Common myeloid progenitor, CD34-positive (primary cell): ENCODE measurements at regions of chr10 and their contacts with region 1.

Region 1: GRCh38 chr10:47024399-47025252 is 113.4 kb downstream of the PTPN20 start:
- DNase-seq: peak; percentile 68 to 77 (median 70)
- H3K4me3 ChIP-seq: no peak overlapping the region
- H3K27ac ChIP-seq: no peak overlapping the region
- H3K4me1 ChIP-seq: peaks cover 0 to 5% (median 1%) of the 10 kb centered on the region in 4 experiments
- H3K27me3 ChIP-seq: peaks cover 0 to 2% (median 0%) of the 10 kb centered on the region in 5 experiments

Region 2: DNA sequence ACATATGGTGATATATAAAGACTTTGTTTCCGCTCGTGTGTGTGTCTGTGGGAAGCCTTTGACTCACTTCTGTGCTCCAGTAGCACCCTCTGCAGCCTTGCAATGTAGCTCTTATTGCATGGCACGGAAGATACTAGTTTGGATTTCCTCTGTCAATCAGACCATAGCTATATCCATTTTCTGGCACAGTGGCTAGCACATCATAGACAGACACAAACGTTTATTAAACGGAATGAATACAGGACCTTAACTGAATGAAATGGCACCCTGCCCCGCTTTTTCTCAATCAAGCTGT is 237.4 kb before region 1 on chr10:
- CTCF ChIA-PET with region 1: no interaction called
- POLR2A ChIA-PET with region 1: no interaction called
- DNase-seq: peak; percentile 38 to 73 (median 45)
- H3K4me3 ChIP-seq: peak overlapping the region in 6 of 7 experiments; percentile 62 to 82 (median 72)
- H3K27ac ChIP-seq: peak overlapping the region in 1 of 2 experiments; percentile 61
- H3K4me1 ChIP-seq: peaks cover 0 to 4% (median 1%) of the 10 kb centered on the region in 4 experiments
- H3K27me3 ChIP-seq: no peaks in the 10 kb centered on the region

Region 3: GRCh38 chr10:47013507-47014154 is 11.0 kb before region 1 on chr10:
- CTCF ChIA-PET with region 1: interaction called, 18 read pairs
- POLR2A ChIA-PET with region 1: no interaction called
- DNase-seq: no peak
- H3K4me3 ChIP-seq: no peak overlapping the region
- H3K27ac ChIP-seq: no peak overlapping the region
- H3K4me1 ChIP-seq: peaks cover 0 to 4% (median 0%) of the 10 kb centered on the region in 4 experiments
- H3K27me3 ChIP-seq: no peaks in the 10 kb centered on the region

Region 4: DNA sequence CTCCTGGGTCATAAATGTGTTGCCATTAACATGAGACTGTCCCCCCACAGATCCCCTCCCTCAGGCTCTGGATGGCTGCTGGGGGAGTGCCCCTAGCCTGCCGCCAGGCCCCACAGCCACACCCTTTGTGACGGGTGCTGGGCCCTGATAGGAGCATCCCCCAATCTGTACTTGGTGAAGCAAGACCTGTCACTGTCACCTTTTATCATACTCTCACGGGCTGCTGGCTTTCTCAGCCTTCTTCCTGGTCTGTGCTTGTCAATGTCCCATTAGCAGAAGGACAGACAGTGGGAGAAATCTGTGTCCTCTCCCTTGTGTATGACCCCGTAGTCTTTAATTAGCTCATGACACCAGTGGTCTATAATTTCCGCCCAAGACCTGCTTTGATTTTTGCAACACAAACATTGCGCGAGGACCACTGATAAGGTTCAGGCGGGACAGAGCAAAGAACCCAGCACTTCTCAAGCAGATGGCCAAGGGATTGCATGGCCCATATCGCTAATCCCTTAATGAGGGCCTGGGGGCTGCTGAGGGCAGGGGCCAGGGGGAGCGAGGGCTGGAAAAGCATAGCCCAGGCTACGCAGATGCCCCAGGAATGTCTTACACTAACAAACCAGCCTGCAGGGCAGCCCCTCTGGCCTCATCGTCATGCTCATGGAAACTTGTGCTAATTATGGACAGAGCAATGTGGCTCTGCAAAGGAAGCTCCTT is 14.4 kb after region 1 on chr10:
- CTCF ChIA-PET with region 1: interaction called, 16 read pairs
- POLR2A ChIA-PET with region 1: no interaction called
- DNase-seq: no peak
- H3K4me3 ChIP-seq: no peak overlapping the region
- H3K27ac ChIP-seq: no peak overlapping the region
- H3K4me1 ChIP-seq: no peaks in the 10 kb centered on the region
- H3K27me3 ChIP-seq: peaks cover 0 to 3% (median 0%) of the 10 kb centered on the region in 5 experiments

Region 5: GRCh38 chr10:47047671-47048525 is 23.3 kb after region 1 on chr10:
- CTCF ChIA-PET with region 1: interaction called, 33 read pairs
- POLR2A ChIA-PET with region 1: no interaction called
- DNase-seq: peak; percentile 70 to 81 (median 75)
- H3K4me3 ChIP-seq: no peak overlapping the region
- H3K27ac ChIP-seq: no peak overlapping the region
- H3K4me1 ChIP-seq: peaks cover 0 to 12% (median 9%) of the 10 kb centered on the region in 4 experiments
- H3K27me3 ChIP-seq: no peaks in the 10 kb centered on the region

Region 6: DNA sequence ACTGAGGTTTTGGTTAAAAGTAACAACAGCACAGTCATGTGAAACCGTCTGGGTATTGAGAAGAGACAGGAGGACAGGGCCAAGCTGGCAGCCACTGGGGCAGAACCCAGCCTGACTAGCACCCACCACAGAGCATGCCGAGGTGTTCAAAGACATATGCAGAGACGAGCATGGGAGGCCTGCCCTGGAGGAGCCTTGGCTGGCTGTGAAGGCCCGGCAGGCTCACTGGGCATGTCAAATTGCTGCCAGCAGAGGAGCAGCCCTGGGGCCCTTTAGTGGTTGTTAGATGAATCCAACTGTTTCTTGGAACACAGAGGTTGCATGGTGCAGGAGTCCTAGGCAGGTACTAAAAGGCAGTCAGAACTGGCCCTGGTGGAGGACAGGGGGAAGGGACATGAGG is 292.6 kb after region 1 on chr10:
- CTCF ChIA-PET with region 1: interaction called, 69 read pairs
- POLR2A ChIA-PET with region 1: no interaction called
- DNase-seq: no peak
- H3K4me3 ChIP-seq: no peak overlapping the region
- H3K27ac ChIP-seq: no peak overlapping the region
- H3K4me1 ChIP-seq: no peaks in the 10 kb centered on the region
- H3K27me3 ChIP-seq: peaks cover 0 to 2% (median 0%) of the 10 kb centered on the region in 5 experiments